A549 (cell line): ENCODE measurements at regions of chr1 and their contacts with region 1.

Region 1: DNA sequence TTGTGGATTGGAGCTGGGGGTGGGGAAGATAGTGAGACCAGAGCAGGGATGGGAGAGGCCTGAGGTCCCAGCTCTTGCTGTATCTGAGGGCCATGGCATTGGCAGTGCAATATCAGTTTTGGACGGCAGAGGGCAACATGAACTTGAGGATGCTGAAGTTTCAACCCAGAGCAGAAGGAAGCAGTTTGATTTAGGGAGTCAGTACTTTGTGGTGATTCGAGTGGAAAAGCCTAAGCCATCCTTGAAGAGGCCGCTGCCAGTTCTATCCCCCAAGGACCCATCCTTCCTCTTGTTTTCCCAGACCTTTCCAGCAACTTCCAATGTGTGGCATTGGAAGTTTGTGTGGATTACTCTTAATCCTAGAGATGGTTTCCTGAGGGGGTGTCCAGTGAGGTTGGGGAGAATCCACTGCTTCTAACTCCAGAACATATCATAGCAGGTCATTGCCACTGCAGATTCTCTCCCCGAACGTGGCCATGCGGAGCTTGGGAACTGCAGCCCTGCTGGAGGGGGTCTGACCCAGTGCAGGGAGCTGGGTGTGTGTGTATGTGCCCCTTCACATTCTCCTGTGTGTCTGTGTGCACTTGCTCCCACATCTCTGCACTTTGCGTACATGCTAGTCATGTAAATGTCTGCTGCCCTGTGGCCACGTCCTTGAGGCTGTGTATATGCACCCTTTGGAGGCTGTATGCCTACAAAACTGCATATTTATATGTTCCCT is 24.1 kb downstream of the SLC26A9 start:
- DNase-seq: peak; percentile 85 to 86
- ATAC-seq: peak; percentile 94 to 96
- H3K4me3 ChIP-seq: no peak overlapping the region
- H3K27ac ChIP-seq: peak overlapping the region; percentile 48 to 71; a peak in 4 of 6 replicates
- H3K4me1 ChIP-seq: peaks cover 8% of the 10 kb centered on the region
- CTCF ChIP-seq: peak; percentile 93
- EP300 ChIP-seq: no peak
- POLR2A ChIP-seq: no peak
- RAD21 ChIP-seq: peak; percentile 98 to 99

Region 2: DNA sequence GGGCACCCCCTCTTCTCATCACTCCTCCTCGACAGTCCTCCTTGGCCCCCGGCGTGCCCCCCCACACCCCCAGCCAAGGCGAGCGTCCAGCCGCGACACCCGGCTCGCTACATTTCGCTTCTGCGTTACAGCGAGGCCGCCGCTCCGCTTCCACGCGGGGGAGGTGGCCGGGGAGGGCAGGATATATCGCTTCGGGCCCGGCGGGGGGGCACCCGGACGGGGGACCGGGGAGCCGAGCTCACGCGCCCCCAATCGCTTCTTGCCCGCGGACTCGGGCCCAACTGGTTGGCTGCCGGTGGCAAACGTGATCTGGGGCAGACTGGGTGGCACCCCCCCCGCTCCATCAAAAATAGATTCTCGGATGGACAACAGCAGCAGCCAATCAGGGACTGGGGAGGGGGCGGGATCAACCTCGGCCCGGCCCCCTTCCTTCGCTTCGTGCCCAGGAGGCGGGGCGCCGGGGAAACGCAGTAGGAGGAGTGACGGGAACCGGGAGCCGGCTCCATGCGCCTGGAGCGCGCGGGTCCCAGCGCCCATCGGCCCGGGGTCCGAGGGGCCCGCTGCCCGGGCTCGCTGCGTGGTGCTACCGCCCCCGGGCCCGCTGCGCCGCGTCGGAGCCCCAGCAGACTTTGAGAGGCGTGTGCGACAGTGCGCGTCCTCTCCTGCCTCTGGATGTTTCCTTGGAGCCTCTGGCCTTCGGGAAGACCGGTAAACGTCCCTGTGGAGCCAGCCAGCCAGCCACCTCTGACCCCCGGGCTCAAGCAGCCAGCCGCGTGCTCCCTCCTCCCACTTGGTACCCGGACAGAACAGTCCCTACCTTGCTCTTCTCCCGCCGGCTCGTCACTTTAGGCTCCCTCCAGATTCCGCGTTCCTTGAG is 106.1 kb before region 1 on chr1 and contains the start of gene SLC41A1:
- CTCF ChIA-PET with region 1: interaction called, 12 read pairs
- POLR2A ChIA-PET with region 1: no interaction called
- DNase-seq: peak; percentile 90 to 95
- ATAC-seq: peak; percentile 94 to 95
- H3K4me3 ChIP-seq: peak within 1 kb of the TSS; percentile 76
- H3K27ac ChIP-seq: peak within 1 kb of the TSS; percentile 81 to 98
- H3K4me1 ChIP-seq: peaks cover 19% of the 10 kb centered on the region
- CTCF ChIP-seq: no peak
- EP300 ChIP-seq: no peak
- POLR2A ChIP-seq: peak; percentile 56
- RAD21 ChIP-seq: no peak
- polyA plus RNA-seq, gene SLC41A1: 23.5 and 26.0 TPM in 2 replicates

Region 3: DNA sequence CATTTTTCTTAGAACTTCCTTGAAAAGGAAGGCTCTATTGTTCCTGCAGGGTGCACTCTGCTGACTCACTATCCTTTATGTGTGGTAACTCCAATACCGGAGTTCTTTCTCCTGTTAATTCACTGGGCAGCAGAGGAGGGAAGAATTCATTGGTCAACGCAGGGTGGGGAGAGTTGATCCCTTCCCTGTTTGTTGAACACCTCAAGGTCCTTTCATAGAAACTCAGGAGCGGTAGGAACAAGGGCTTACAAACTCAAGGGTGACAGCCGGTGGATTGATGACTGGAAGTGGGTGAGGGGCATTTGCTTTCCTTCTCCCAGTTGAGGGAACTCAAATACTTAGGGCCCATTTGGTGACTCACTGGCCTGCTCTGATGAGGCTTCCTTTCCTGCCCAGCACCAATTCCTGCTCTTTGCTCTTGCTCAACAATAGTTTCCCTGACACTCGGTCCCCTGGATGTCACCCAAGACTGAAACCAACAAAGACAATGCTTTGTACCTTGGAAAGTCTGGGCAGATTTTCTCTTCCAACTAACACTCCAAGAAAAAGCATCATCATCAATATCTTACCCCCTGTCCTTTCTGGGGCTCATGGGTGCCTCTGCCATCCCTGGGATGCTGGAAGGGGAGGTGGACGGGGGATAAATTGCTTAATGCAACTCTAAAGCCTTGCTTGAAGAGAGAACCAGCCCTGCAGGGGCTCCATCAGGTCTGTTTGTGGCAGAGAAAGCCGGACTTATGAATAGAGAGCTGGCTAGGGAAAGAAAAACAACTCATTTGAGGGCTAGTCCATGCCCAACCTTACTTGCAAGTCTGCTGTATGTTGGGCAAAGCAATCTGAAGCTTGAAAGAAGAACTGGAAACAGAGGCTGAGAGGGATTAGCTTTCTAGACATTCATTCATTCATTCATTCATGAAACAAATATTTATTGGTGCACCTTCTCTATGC is 14.8 kb after region 1 on chr1:
- CTCF ChIA-PET with region 1: interaction called, 49 read pairs
- POLR2A ChIA-PET with region 1: no interaction called
- DNase-seq: peak; percentile 89 to 91
- ATAC-seq: peak; percentile 87 to 90
- H3K4me3 ChIP-seq: no peak overlapping the region
- H3K27ac ChIP-seq: peak overlapping the region; percentile 84 to 93
- H3K4me1 ChIP-seq: peaks cover 60% of the 10 kb centered on the region
- CTCF ChIP-seq: no peak
- EP300 ChIP-seq: peak in 1 of 2 experiments; percentile 38; a peak in 1 of 5 replicates
- POLR2A ChIP-seq: no peak
- RAD21 ChIP-seq: no peak; a peak in 1 of 5 replicates

Region 4: DNA sequence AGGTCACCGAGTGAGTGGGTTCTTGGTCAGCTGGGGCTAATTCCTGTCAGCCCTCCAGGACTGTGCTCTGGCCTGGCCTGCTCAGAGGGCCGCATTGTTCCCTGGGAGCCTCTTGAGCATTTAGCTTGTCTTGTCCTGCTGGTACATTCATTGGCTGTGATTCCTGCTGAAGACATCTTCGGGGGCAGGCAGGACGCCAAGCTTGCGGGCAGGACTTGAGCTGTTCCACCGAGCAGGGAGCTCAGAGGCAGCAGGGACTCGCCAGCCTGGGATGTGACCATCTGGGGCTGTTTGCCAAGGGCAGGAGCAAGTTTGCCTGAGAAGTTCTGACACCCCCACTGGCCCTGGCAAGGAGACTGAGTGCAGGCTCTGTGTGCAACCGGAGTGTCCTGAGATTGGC is 31.1 kb after region 1 on chr1:
- CTCF ChIA-PET with region 1: interaction called, 28 read pairs
- POLR2A ChIA-PET with region 1: no interaction called
- DNase-seq: no peak
- ATAC-seq: no peak
- H3K4me3 ChIP-seq: no peak overlapping the region
- H3K27ac ChIP-seq: no peak overlapping the region
- H3K4me1 ChIP-seq: no peaks in the 10 kb centered on the region
- CTCF ChIP-seq: no peak
- EP300 ChIP-seq: no peak
- POLR2A ChIP-seq: no peak
- RAD21 ChIP-seq: no peak

Region 5: GRCh38 chr1:205961405-205961804 is 42.2 kb after region 1 on chr1:
- CTCF ChIA-PET with region 1: interaction called, 52 read pairs
- POLR2A ChIA-PET with region 1: no interaction called
- DNase-seq: no peak
- ATAC-seq: no peak; a peak in 1 of 6 replicates
- H3K4me3 ChIP-seq: no peak overlapping the region
- H3K27ac ChIP-seq: 0 out of 6 replicates have a peak overlapping the region, but pooled peaks of 1 of the 2 experiments have one; percentile 1
- H3K4me1 ChIP-seq: no peaks in the 10 kb centered on the region
- CTCF ChIP-seq: no peak
- EP300 ChIP-seq: no peak
- POLR2A ChIP-seq: no peak
- RAD21 ChIP-seq: no peak

Region 6: DNA sequence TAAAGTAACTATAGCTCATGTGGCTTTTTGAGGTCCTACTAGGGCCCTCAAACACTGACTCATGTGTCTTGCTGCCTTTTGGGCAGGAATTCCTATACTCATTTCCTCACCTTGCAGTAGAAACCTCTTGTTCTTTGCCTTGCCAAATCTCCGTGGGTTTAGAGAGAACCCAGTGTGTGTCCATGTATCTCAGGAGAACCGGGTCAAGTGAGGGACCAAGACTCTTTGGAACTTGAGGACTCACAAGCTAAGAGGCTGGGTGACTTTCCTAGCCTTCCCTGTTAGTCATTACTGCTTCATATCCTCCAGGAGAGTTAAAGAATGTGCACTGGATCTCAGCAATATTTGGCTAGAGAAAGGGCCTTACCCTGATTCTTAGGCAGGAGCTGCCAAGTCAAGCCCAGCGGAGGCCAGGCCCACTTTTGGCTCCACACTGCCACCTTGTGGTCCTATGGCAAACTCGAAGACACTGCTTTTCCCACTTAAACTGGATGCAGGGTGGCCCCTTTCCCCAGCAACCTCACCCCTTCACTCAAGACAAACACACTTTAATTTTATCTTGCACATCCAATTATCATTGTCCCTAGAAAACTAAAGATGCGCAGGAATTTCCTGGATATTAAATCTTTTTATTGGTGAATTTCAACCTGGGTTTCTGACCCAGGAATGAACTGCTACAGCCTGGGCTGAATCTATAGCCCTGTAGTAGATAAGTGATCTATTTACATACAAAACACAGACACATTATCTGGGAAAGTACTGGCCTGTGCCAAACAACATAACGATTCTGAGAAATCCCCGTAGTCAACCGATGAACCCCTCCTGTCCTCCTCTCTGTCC is 187.4 kb after region 1 on chr1:
- CTCF ChIA-PET with region 1: interaction called, 80 read pairs
- POLR2A ChIA-PET with region 1: no interaction called
- DNase-seq: peak; percentile 71 to 81
- ATAC-seq: peak; percentile 87 to 98
- H3K4me3 ChIP-seq: no peak overlapping the region
- H3K27ac ChIP-seq: no peak overlapping the region
- H3K4me1 ChIP-seq: no peaks in the 10 kb centered on the region
- CTCF ChIP-seq: peak; percentile 92
- EP300 ChIP-seq: no peak
- POLR2A ChIP-seq: no peak
- RAD21 ChIP-seq: peak; percentile 90 to 94